ENCODE measurements at regions of chr9 and their contacts with region 1.

Region 1: GRCh38 chr9:34500623-34501267 is 22.0 kb downstream of the ENHO start:
- DNase-seq: peak in 1 of 2 donors; percentile 75
- H3K4me3 ChIP-seq: no peak overlapping the region
- H3K27ac ChIP-seq: no peak overlapping the region
- H3K4me1 ChIP-seq: peaks cover 11 to 17% of the 10 kb centered on the region in 2 donors
- H3K27me3 ChIP-seq: no peaks in the 10 kb centered on the region
- CTCF ChIP-seq: peak; percentile 78 to 98 (median 97)

Region 2: GRCh38 chr9:34363619-34364351 is 137.0 kb before region 1 on chr9:
- intact Hi-C with region 1: no loop called
- DNase-seq: peak in 1 of 2 donors; percentile 30
- H3K4me3 ChIP-seq: no peak overlapping the region
- H3K27ac ChIP-seq: no peak overlapping the region
- H3K4me1 ChIP-seq: no peaks in the 10 kb centered on the region
- H3K27me3 ChIP-seq: no peaks in the 10 kb centered on the region
- CTCF ChIP-seq: no peak

Region 3: GRCh38 chr9:34403554-34404380 is 97.0 kb before region 1 on chr9:
- intact Hi-C with region 1: loop called (anchors 1 kb)
- DNase-seq: peak in 1 of 2 donors; percentile 81
- H3K4me3 ChIP-seq: no peak overlapping the region
- H3K27ac ChIP-seq: no peak overlapping the region
- H3K4me1 ChIP-seq: no peaks in the 10 kb centered on the region
- H3K27me3 ChIP-seq: no peaks in the 10 kb centered on the region
- CTCF ChIP-seq: peak; percentile 79 to 96 (median 95)

Region 4: DNA sequence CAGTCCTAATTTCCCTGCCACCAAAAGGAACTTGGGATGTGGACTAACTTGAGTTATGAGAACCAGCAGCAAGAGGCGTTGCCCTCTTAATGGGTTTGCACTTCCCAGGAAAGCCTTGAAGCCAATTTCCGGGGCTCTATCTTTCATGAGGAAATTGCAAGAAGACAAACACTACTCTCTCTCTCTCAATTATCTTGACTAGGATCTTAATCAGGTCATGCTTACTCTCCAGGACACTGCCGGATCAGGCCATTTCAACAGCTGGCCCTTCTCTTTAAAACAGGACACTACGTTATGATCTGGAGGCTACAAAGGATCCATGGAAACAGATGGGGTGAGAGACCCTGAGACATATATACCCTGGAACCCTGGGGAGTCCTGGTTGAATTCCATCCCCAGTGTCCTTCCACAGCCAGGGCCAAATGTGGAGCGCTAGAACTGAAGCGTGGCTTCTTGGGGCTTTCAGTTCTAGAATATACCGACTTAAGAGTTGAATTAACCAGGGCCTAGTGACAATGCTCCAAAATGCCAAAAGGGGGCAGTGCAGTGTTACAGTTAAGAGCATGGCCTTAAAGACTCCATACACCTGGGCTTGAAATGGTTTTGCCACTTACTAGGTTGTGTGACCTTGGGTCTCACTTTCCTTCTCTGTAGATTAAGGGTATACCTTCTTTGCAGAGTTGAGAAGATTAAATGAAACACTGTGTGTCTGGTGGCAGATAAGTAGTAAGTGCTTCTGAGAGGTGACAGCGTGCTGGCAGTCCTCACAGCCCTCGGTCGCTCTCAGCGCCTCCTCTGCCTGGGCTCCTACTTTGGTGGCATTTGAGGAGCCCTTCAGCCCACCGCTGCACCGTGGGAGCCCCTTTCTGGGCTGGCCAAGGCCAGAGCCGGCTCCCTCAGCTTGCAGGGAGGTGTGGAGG is 63.5 kb before region 1 on chr9:
- intact Hi-C with region 1: loop called (anchors 1 kb)
- DNase-seq: no peak
- H3K4me3 ChIP-seq: no peak overlapping the region
- H3K27ac ChIP-seq: no peak overlapping the region
- H3K4me1 ChIP-seq: no peaks in the 10 kb centered on the region
- H3K27me3 ChIP-seq: no peaks in the 10 kb centered on the region
- CTCF ChIP-seq: peak; percentile 52 to 60 (median 57)